ENCODE measurements at regions of chr19 and their contacts with region 1.

Region 1: GRCh38 chr19:2950286-2951124 is 5.7 kb upstream of the ZNF77 start:
- DNase-seq: peak; percentile 99 to 100 (median 100)
- ATAC-seq: peak; percentile 90 to 94 (median 93)
- H3K4me3 ChIP-seq: peak overlapping the region; percentile 87 to 91 (median 91)
- H3K27ac ChIP-seq: peak overlapping the region; percentile 83 to 89 (median 84)
- H3K4me1 ChIP-seq: peaks cover 0 to 17% (median 5%) of the 10 kb centered on the region in 4 donors
- H3K27me3 ChIP-seq: no peaks in the 10 kb centered on the region
- CTCF ChIP-seq: no peak
- POLR2A ChIP-seq: peak; percentile 89

Region 2: GRCh38 chr19:2691951-2692350 is 258.6 kb before region 1 on chr19:
- intact Hi-C with region 1: no loop called
- DNase-seq: no peak
- ATAC-seq: no peak
- H3K4me3 ChIP-seq: no peak overlapping the region
- H3K27ac ChIP-seq: no peak overlapping the region
- H3K4me1 ChIP-seq: no peaks in the 10 kb centered on the region
- H3K27me3 ChIP-seq: no peaks in the 10 kb centered on the region
- CTCF ChIP-seq: no peak
- POLR2A ChIP-seq: no peak

Region 3: DNA sequence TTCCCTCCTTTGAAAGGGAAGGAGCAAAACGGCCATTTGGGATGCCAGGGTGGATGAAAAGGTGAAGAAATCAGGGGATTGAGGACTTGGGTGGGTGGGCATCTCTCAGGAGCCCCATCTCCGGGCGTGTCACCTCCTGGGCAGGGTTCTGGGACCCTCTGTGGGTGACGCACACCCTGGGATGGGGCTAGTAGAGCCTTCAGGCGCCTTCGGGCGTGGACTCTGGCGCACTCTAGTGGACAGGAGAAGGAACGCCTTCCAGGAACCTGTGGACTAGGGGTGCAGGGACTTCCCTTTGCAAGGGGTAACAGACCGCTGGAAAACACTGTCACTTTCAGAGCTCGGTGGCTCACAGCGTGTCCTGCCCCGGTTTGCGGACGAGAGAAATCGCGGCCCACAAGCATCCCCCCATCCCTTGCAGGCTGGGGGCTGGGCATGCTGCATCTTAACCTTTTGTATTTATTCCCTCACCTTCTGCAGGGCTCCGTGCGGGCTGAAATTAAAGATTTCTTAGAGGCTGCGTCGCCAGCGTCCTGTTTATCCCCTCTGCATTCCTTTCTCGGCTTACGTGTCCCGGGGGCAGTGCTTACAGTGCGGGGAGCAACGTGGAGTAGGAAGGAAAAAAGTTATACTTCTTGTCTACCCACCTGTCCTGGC is 212.9 kb after region 1 on chr19:
- intact Hi-C with region 1: loop called in 1 of 2 experiments (anchors 10 kb)
- DNase-seq: peak; percentile 71 to 83 (median 73)
- ATAC-seq: peak; percentile 86 to 92 (median 90)
- H3K4me3 ChIP-seq: no peak overlapping the region
- H3K27ac ChIP-seq: no peak overlapping the region
- H3K4me1 ChIP-seq: no peaks in the 10 kb centered on the region
- H3K27me3 ChIP-seq: no peaks in the 10 kb centered on the region
- CTCF ChIP-seq: peak; percentile 84 to 98 (median 96)
- POLR2A ChIP-seq: no peak

Measured in right lobe of liver (tissue), 6 donors.